ENCODE measurements at regions of chr6 and their contacts with region 1.

Region 1: DNA sequence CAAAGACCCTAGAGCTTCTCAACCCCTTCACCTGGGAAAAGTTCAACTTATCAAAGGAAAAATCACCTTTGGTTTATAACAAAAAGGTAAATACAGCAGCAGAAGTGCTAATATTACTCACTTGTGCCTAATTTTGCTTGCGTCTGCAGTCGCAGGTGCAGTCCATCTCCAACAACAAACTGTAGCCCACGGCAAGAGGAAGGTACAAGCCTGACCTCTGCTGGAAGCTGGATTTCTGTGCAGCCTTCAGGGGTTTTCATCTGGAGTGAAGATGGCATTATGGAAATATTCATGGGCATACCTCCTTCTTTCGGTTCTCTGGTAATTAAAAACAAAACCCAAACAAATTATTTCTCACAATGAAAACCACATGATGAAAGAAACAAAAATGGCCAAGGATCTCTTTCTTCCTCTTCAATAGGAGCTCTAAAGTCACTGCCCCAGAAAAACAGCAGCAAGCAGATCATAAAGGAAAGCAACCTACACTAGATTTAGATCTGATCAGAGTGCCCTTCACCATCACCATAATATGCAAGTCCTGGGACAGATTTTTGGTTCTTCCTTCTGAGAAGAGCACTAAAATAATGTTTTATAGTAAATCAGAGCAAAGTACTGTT is 7.8 kb downstream of the UBE3D start:
- DNase-seq: no peak
- H3K4me3 ChIP-seq: no peak overlapping the region
- CTCF ChIP-seq: no peak
- POLR2A ChIP-seq: no peak

Region 2: DNA sequence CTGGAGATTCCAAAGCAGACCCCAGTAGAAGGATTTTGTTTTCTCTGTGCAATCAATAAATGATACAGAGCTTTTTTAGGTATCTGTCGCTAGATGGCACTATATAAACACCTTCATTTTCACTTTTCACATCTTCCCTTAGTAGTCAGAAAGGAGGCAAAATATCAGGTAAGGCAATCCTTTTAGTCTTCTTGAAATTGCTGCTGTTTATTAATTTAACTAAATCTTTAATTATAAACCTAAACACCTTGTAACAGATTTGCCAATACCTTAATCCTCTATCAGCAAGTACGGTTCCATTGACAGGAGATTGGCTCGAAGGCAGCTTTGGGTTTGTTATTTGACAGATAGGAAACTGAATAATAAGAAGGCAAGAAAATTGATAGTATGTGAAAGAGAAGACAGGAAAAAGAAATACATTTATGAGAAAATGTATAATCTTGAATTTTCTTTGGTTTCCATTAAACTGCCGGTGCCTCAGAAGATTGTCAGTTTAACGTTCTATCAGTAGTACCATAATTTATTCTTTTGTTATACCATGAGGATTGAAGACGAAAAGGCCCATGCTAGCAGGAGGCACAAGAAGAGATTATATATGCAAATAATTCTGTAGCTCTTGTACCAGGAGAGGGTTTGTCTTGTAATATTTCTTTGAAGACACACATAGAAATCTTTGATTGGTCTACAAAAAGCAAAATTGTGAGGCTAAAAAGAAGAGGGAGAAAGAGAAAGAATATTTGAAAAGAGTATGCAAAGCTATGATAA is 786.8 kb before region 1 on chr6:
- intact Hi-C with region 1: loop called (anchors 5 kb)
- DNase-seq: no peak
- H3K4me3 ChIP-seq: no peak overlapping the region
- CTCF ChIP-seq: no peak
- POLR2A ChIP-seq: no peak